ENCODE measurements at regions of chr1 and their contacts with region 1.

Region 1: DNA sequence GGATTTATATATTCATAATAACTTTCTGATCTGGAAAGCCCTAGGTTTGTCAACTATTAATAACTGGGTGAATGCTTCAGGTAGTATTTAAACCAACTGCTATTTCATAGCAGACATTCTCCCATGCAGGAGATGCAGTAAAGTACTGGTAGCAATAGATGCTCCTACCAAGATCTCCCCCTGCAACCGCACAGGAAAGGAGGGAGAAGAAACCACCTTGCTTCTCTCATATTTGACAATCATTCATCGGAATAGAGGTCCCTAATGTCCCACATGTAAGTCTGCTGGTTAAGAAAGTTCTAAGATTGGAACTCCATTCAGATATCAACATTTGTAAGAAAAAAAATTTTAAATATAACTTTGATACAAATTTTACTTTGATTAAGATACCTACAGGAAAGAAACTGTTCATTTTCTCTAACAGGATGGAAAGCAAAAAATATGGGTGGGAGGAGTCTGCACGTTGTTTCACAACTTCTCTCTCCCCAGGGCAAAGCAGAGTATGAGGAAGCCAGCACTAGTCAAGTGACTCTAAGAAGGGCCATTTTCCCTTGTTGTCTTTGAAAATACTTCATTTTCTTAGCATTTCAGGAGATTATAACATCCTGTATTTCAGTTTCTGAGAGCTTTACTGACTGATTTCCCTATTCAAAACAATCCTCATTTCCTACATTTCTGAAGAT is at the start of gene PYHIN1:
- DNase-seq: no peak
- ATAC-seq: no peak
- H3K4me3 ChIP-seq: peak within 1 kb of the TSS in 3 of 12 donors; percentile 24 to 53 (median 26)
- H3K27ac ChIP-seq: peak within 1 kb of the TSS in 1 of 12 donors; percentile 86
- H3K4me1 ChIP-seq: peaks cover 0 to 3% (median 0%) of the 10 kb centered on the region in 12 donors
- H3K27me3 ChIP-seq: no peaks in the 10 kb centered on the region
- CTCF ChIP-seq: no peak
- POLR2A ChIP-seq: no peak
- total RNA-seq, gene PYHIN1: 0.23 to 3.1 (median 0.73) TPM in 4 of 9 donors, not detected in the others

Region 2: DNA sequence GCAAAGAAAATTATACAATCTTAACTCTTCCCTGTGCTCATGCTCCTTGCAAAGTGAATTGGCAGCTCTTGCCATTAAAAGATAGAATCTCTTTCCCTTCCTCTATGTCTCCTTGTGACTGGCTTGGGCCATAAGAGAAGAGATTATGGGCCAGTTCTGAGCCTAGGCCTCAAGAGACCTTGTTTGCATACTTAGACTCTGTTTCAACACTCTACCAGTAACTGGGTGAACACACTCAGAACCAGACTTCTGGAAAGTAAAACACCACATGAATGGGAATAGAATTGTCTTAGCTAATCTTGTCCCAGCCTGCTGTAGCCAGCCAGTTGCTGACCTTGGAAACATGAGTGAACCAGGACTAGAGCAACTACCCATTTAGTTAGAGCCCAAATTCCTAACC is 195.3 kb before region 1 on chr1:
- intact Hi-C with region 1: no loop called
- DNase-seq: no peak
- ATAC-seq: no peak
- H3K4me3 ChIP-seq: no peak overlapping the region
- H3K27ac ChIP-seq: no peak overlapping the region
- H3K4me1 ChIP-seq: no peaks in the 10 kb centered on the region
- H3K27me3 ChIP-seq: peaks cover 0 to 6% (median 0%) of the 10 kb centered on the region in 9 donors
- CTCF ChIP-seq: no peak
- POLR2A ChIP-seq: no peak

Region 3: GRCh38 chr1:158873141-158873540 is 58.1 kb before region 1 on chr1:
- intact Hi-C with region 1: loop called in 1 of 10 experiments (anchors 10 kb)
- DNase-seq: no peak
- ATAC-seq: no peak
- H3K4me3 ChIP-seq: no peak overlapping the region
- H3K27ac ChIP-seq: no peak overlapping the region
- H3K4me1 ChIP-seq: no peaks in the 10 kb centered on the region
- H3K27me3 ChIP-seq: no peaks in the 10 kb centered on the region
- CTCF ChIP-seq: no peak
- POLR2A ChIP-seq: no peak

Region 4: DNA sequence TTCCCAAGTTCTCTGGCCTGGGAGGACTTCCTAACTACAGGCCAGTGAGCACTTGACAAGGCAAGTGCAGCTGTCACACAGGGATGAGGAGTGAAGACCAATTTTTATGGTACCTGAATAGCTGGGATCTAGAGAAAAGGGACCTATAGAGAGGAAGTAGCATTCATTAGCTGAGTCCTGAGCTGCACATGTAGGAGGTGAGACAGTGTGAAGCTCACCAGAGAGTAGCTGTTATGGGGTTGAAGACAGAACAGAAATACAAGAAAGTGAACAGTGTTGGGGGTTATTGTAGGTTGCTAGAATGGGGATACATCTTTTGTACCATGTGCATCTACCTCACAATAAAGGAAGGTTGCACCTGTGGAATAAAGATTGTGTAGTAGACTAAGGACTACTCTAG is 37.5 kb before region 1 on chr1:
- intact Hi-C with region 1: no loop called
- DNase-seq: no peak
- ATAC-seq: no peak
- H3K4me3 ChIP-seq: no peak overlapping the region
- H3K27ac ChIP-seq: no peak overlapping the region
- H3K4me1 ChIP-seq: no peaks in the 10 kb centered on the region
- H3K27me3 ChIP-seq: no peaks in the 10 kb centered on the region
- CTCF ChIP-seq: no peak
- POLR2A ChIP-seq: no peak